Activated B cell treated with CpG ODN at 0.5 μM for 24 hours (primary cell): ENCODE measurements at regions of chr18 and their contacts with region 1.

Region 1: GRCh38 chr18:72762515-72763122 is 105.2 kb downstream of the NETO1 start:
- DNase-seq: no peak
- ATAC-seq: peak; percentile 52
- H3K4me3 Mint-ChIP-seq: no peak overlapping the region
- H3K27ac Mint-ChIP-seq: no peak overlapping the region
- H3K4me1 Mint-ChIP-seq: no peaks in the 10 kb centered on the region
- H3K27me3 Mint-ChIP-seq: no peaks in the 10 kb centered on the region
- CTCF ChIP-seq: peak; percentile 27

Region 2: DNA sequence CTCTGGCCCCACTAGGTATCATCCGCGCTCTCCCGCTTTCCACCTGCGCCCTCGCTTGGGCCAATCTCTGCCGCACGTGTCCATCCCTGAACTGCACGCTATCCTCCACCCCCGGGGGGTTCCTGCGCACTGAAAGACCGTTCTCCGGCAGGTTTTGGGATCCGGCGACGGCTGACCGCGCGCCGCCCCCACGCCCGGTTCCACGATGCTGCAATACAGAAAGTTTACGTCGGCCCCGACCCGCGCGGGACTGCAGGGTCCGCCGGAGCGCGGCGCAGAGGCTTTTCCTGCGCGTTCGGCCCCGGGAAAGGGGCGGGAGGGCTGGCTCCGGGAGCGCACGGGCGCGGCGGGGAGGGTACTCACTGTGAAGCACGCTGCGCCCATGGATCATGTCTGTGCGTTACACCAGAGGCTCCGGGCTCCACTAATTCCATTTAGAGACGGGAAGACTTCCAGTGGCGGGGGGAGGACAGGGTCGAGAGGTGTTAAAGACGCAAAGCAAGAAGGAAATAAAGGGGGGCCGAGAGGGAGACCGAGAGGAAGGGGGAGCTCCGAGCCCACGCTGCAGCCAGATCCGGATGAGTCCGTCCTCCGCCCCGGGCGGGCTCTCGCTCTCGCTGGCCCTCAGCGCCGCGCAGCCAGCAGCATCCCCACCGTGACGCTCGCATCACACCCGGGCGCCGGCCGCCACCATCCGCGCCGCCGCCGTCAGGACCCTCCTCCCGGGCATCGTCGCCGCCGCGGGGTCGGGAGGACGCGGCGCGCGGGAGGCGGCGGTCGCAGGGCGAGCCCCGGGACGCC is 104.5 kb after region 1 on chr18:
- CTCF ChIA-PET with region 1: no interaction called
- POLR2A ChIA-PET with region 1: no interaction called
- intact Hi-C with region 1: loop called (anchors 5 kb)
- DNase-seq: peak; percentile 24
- ATAC-seq: peak; percentile 46
- H3K4me3 Mint-ChIP-seq: peak overlapping the region; percentile 84
- H3K27ac Mint-ChIP-seq: peak overlapping the region; percentile 57
- H3K4me1 Mint-ChIP-seq: peaks cover 17% of the 10 kb centered on the region
- H3K27me3 Mint-ChIP-seq: peaks cover 8% of the 10 kb centered on the region
- CTCF ChIP-seq: no peak

Region 3: GRCh38 chr18:73136134-73136533 is 373.5 kb after region 1 on chr18:
- CTCF ChIA-PET with region 1: interaction called, 53 read pairs
- POLR2A ChIA-PET with region 1: no interaction called
- intact Hi-C with region 1: loop called (anchors 1 kb)
- DNase-seq: no peak
- ATAC-seq: no peak
- H3K4me3 Mint-ChIP-seq: no peak overlapping the region
- H3K27ac Mint-ChIP-seq: no peak overlapping the region
- H3K4me1 Mint-ChIP-seq: peaks cover 9% of the 10 kb centered on the region
- H3K27me3 Mint-ChIP-seq: no peaks in the 10 kb centered on the region
- CTCF ChIP-seq: no peak

Region 4: GRCh38 chr18:73842795-73843394 is 1080.3 kb after region 1 on chr18:
- CTCF ChIA-PET with region 1: interaction called, 15 read pairs
- POLR2A ChIA-PET with region 1: no interaction called
- intact Hi-C with region 1: loop called (anchors 1 kb)
- DNase-seq: no peak
- ATAC-seq: peak; percentile 52
- H3K4me3 Mint-ChIP-seq: peak overlapping the region; percentile 45
- H3K27ac Mint-ChIP-seq: no peak overlapping the region
- H3K4me1 Mint-ChIP-seq: peaks cover 3% of the 10 kb centered on the region
- H3K27me3 Mint-ChIP-seq: no peaks in the 10 kb centered on the region
- CTCF ChIP-seq: peak; percentile 88

Region 5: GRCh38 chr18:74116633-74117554 is 1354.3 kb after region 1 on chr18:
- CTCF ChIA-PET with region 1: no interaction called
- POLR2A ChIA-PET with region 1: no interaction called
- intact Hi-C with region 1: loop called (anchors 2 kb)
- DNase-seq: no peak
- ATAC-seq: no peak
- H3K4me3 Mint-ChIP-seq: no peak overlapping the region
- H3K27ac Mint-ChIP-seq: no peak overlapping the region
- H3K4me1 Mint-ChIP-seq: peaks cover 9% of the 10 kb centered on the region
- H3K27me3 Mint-ChIP-seq: peaks cover 5% of the 10 kb centered on the region
- CTCF ChIP-seq: no peak

Region 6: DNA sequence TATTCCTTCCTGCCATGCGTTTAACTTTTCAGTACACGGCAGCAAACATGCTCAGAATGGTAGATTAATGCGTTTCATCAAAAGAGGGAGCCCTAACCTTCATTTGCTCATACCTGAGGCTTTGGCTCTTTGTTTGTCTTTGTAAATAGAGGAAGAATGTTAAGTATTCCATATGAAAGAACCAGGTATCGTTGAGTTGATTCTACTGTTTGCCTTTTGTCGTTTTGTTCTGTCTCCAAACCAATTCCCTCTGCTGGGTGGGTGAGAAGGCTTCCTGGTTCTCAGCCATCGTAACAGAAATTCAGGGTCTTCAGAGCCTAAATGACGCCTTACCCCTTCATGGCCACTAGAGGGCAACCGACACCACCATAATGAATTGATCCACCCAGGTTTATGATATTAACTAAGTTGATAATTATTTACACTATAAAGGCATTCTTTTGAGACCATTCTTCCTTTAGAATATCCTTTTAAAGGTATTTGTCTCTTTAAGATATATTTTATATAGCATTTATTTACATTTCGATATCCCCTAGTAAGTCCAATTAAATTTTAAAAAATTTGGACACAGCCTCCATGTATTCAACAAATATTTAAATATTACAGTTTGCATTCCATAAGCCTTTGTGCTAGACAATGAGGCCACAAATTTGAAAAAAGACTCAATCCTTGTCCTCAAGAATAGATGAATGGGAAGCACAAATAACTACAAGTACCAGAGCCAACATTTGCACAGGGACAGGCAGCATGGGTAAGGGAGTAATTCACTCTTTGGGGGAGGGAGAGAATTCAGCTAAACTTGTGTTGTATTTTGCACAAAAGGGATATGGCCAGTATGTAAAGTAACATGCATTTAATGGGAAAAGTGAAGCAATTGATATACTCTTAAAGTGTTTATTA is 1433.9 kb after region 1 on chr18:
- CTCF ChIA-PET with region 1: no interaction called
- POLR2A ChIA-PET with region 1: no interaction called
- intact Hi-C with region 1: loop called (anchors 1 kb)
- DNase-seq: no peak
- ATAC-seq: peak; percentile 95
- H3K4me3 Mint-ChIP-seq: peak overlapping the region; percentile 78
- H3K27ac Mint-ChIP-seq: peak overlapping the region; percentile 79
- H3K4me1 Mint-ChIP-seq: peaks cover 22% of the 10 kb centered on the region
- H3K27me3 Mint-ChIP-seq: peaks cover 8% of the 10 kb centered on the region
- CTCF ChIP-seq: no peak

Region 7: GRCh38 chr18:74551936-74552555 is 1789.4 kb after region 1 on chr18:
- CTCF ChIA-PET with region 1: interaction called, 3 read pairs
- POLR2A ChIA-PET with region 1: no interaction called
- intact Hi-C with region 1: loop called (anchors 2 kb)
- DNase-seq: peak; percentile 41
- ATAC-seq: peak; percentile 97
- H3K4me3 Mint-ChIP-seq: no peak overlapping the region
- H3K27ac Mint-ChIP-seq: no peak overlapping the region
- H3K4me1 Mint-ChIP-seq: no peaks in the 10 kb centered on the region
- H3K27me3 Mint-ChIP-seq: peaks cover 14% of the 10 kb centered on the region
- CTCF ChIP-seq: no peak